ENCODE measurements at regions of chr22 and their contacts with region 1.

Region 1: GRCh38 chr22:37905534-37906363 is at the start of gene MICALL1:
- DNase-seq: peak; percentile 56 to 74 (median 62)
- H3K4me3 ChIP-seq: peak within 1 kb of the TSS; percentile 3 to 58
- H3K4me3 Mint-ChIP-seq: peak within 1 kb of the TSS; percentile 77 to 88 (median 84)
- H3K27ac ChIP-seq: peak within 1 kb of the TSS; percentile 58
- H3K27ac Mint-ChIP-seq: peak within 1 kb of the TSS; percentile 48 to 93 (median 88)
- H3K4me1 ChIP-seq: peaks cover 18% of the 10 kb centered on the region
- H3K4me1 Mint-ChIP-seq: peaks cover 18 to 45% (median 28%) of the 10 kb centered on the region in 4 donors
- H3K27me3 ChIP-seq: no peaks in the 10 kb centered on the region
- H3K27me3 Mint-ChIP-seq: no peaks in the 10 kb centered on the region
- total RNA-seq, gene MICALL1: 30.7 to 31.0 TPM

Region 2: GRCh38 chr22:37807410-37808293 is 98.1 kb before region 1 on chr22 and contains the start of gene GCAT:
- CTCF ChIA-PET with region 1: no interaction called
- POLR2A ChIA-PET with region 1: interaction called, 3 read pairs
- intact Hi-C with region 1: loop called (anchors 1 kb)
- DNase-seq: peak; percentile 70 to 82 (median 75)
- H3K4me3 ChIP-seq: peak within 1 kb of the TSS; percentile 36 to 45
- H3K4me3 Mint-ChIP-seq: peak within 1 kb of the TSS; percentile 69 to 87 (median 78)
- H3K27ac ChIP-seq: no peak within 1 kb of the TSS
- H3K27ac Mint-ChIP-seq: peak within 1 kb of the TSS in 4 of 7 donors; percentile 32 to 47 (median 45)
- H3K4me1 ChIP-seq: peaks cover 50% of the 10 kb centered on the region
- H3K4me1 Mint-ChIP-seq: peaks cover 17 to 50% (median 37%) of the 10 kb centered on the region in 4 donors
- H3K27me3 ChIP-seq: peaks cover 20% of the 10 kb centered on the region
- H3K27me3 Mint-ChIP-seq: peaks cover 30% of the 10 kb centered on the region in 2 donors
- total RNA-seq, gene GCAT: 3.4 to 4.4 TPM

Region 3: GRCh38 chr22:37824674-37825641 is 80.8 kb before region 1 on chr22:
- CTCF ChIA-PET with region 1: no interaction called
- POLR2A ChIA-PET with region 1: no interaction called
- intact Hi-C with region 1: no loop called
- DNase-seq: no peak
- H3K4me3 ChIP-seq: no peak overlapping the region
- H3K4me3 Mint-ChIP-seq: peak overlapping the region in 6 of 8 donors; percentile 10 to 63 (median 46)
- H3K27ac ChIP-seq: no peak overlapping the region
- H3K27ac Mint-ChIP-seq: no peak overlapping the region
- H3K4me1 ChIP-seq: no peaks in the 10 kb centered on the region
- H3K4me1 Mint-ChIP-seq: peaks cover 0 to 13% (median 4%) of the 10 kb centered on the region in 4 donors
- H3K27me3 ChIP-seq: no peaks in the 10 kb centered on the region
- H3K27me3 Mint-ChIP-seq: peaks cover 7% of the 10 kb centered on the region in 2 donors

Region 4: GRCh38 chr22:37849089-37849751 is 56.5 kb before region 1 on chr22 and contains the start of gene EIF3L:
- CTCF ChIA-PET with region 1: interaction called, 3 read pairs
- POLR2A ChIA-PET with region 1: interaction called, 9 read pairs
- intact Hi-C with region 1: loop called (anchors 1 kb)
- DNase-seq: peak; percentile 81 to 88 (median 85)
- H3K4me3 ChIP-seq: peak within 1 kb of the TSS; percentile 61 to 94
- H3K4me3 Mint-ChIP-seq: peak within 1 kb of the TSS; percentile 83 to 98 (median 93)
- H3K27ac ChIP-seq: peak within 1 kb of the TSS; percentile 87
- H3K27ac Mint-ChIP-seq: peak within 1 kb of the TSS; percentile 91 to 99 (median 97)
- H3K4me1 ChIP-seq: peaks cover 29% of the 10 kb centered on the region
- H3K4me1 Mint-ChIP-seq: peaks cover 28 to 58% (median 43%) of the 10 kb centered on the region in 4 donors
- H3K27me3 ChIP-seq: no peaks in the 10 kb centered on the region
- H3K27me3 Mint-ChIP-seq: no peaks in the 10 kb centered on the region
- total RNA-seq, gene EIF3L: 550 to 571 TPM

Region 5: GRCh38 chr22:37953437-37954179 is 47.9 kb after region 1 on chr22 and contains the starts of genes C22orf23 and POLR2F:
- CTCF ChIA-PET with region 1: no interaction called
- POLR2A ChIA-PET with region 1: interaction called, 11 read pairs
- intact Hi-C with region 1: loop called (anchors 5 kb)
- DNase-seq: peak; percentile 94 to 96 (median 95)
- H3K4me3 ChIP-seq: peak within 1 kb of the TSS; percentile 72 to 91
- H3K4me3 Mint-ChIP-seq: peak within 1 kb of the TSS; percentile 96 to 100 (median 100)
- H3K27ac ChIP-seq: peak within 1 kb of the TSS; percentile 72
- H3K27ac Mint-ChIP-seq: peak within 1 kb of the TSS; percentile 76 to 100 (median 99)
- H3K4me1 ChIP-seq: peaks cover 20% of the 10 kb centered on the region
- H3K4me1 Mint-ChIP-seq: peaks cover 33 to 52% (median 40%) of the 10 kb centered on the region in 4 donors
- H3K27me3 ChIP-seq: peaks cover 3% of the 10 kb centered on the region
- H3K27me3 Mint-ChIP-seq: peaks cover 9 to 13% of the 10 kb centered on the region in 2 donors
- total RNA-seq, gene C22orf23: not detected
- total RNA-seq, gene POLR2F: 44.9 to 47.5 TPM